ENCODE measurements at regions of chr21 and their contacts with region 1.

Region 1: GRCh38 chr21:42258153-42258884 is 39.4 kb downstream of the ABCG1 start:
- DNase-seq: peak; percentile 69 to 89 (median 76)
- ATAC-seq: peak; percentile 63 to 75 (median 64)
- H3K4me3 ChIP-seq: no peak overlapping the region
- H3K27ac ChIP-seq: no peak overlapping the region
- H3K4me1 ChIP-seq: peaks cover 2 to 67% (median 30%) of the 10 kb centered on the region in 12 donors
- H3K27me3 ChIP-seq: no peaks in the 10 kb centered on the region
- CTCF ChIP-seq: peak; percentile 69 to 88 (median 78)
- POLR2A ChIP-seq: no peak

Region 2: DNA sequence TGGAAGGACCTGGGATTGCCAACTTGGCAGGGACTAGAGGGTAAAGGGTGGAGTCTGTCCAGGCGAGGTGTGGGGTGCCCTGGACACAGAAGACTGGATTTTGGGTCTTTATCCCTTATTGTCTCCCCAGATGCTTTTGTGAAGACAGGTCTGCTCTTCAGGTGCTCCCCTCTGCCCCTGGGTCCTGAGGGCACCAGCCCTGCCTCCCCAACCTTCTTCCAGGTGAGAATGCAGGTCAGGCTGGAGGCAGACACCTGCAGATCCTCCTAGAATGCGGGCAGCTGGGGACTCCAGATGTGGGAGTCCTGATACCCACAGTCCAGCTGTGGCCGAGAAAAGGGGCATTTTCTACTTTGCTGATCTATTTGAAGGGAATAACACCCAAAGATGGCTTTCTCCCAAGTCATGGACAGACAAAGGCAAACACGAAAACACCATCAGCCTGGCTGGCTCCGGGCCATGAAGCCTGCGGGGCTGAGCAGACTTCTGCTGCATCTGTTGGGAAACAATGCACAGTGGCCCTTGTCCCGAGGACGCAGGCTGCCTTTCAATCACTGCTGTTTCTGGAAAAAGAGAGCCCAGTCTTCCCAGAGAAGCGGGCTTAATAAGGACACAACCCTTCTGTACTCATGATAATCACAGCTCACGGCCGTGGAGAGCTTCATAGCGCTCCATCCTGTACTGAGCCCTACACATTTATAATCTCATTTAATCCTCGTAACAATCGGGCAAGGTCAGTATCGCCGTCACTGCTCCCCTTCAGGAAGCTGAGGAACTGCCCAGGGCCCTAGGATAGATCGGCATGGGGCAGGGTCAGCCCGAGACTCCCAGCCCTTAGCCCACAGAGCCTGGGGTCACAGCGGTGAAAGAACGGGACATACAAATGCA is 101.4 kb before region 1 on chr21:
- intact Hi-C with region 1: loop called in 3 of 10 experiments (anchors 5 to 10 kb)
- DNase-seq: peak in 1 of 5 donors; percentile 45
- ATAC-seq: peak in 1 of 4 donors; percentile 36
- H3K4me3 ChIP-seq: no peak overlapping the region
- H3K27ac ChIP-seq: no peak overlapping the region
- H3K4me1 ChIP-seq: peaks cover 0 to 5% (median 0%) of the 10 kb centered on the region in 12 donors
- H3K27me3 ChIP-seq: peaks cover 0 to 18% (median 0%) of the 10 kb centered on the region in 9 donors
- CTCF ChIP-seq: no peak
- POLR2A ChIP-seq: no peak

Region 3: DNA sequence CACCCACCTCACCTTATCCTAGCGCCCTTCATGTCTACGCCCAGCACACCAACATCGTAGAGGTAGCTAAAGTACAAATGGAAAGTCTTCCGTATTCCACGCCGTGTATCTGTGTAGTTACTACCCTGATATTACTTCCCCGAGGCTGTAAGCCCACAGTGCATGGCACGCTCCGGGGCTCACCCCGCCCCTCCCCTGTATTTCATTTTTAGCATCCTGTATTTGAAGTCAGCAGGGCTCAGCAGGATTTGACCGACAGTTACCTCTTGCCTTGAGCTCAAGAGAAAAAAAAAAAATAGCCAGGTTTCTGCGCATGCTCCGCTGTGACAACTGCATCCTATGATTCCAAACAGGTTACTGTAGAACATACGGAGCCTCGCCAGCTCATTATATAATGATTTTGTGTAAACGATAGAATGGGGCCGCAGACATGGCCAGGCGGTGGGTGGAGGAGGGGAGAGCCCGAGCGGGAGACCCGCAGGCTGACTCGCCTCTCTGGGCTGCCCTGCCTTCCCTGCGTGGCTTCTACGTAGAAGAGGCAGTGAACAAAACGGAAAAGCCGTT is 38.1 kb before region 1 on chr21:
- intact Hi-C with region 1: loop called in 4 of 10 experiments (anchors 5 kb)
- DNase-seq: peak in 4 of 5 donors; percentile 56 to 74 (median 70)
- ATAC-seq: peak; percentile 70 to 86 (median 74)
- H3K4me3 ChIP-seq: peak overlapping the region; percentile 49 to 95 (median 78)
- H3K27ac ChIP-seq: peak overlapping the region; percentile 44 to 90 (median 83)
- H3K4me1 ChIP-seq: peaks cover 7 to 48% (median 28%) of the 10 kb centered on the region in 12 donors
- H3K27me3 ChIP-seq: no peaks in the 10 kb centered on the region
- CTCF ChIP-seq: no peak
- POLR2A ChIP-seq: no peak

Region 4: GRCh38 chr21:42239556-42240372 is 18.6 kb before region 1 on chr21:
- intact Hi-C with region 1: loop called in 1 of 10 experiments (anchors 2 kb)
- DNase-seq: peak in 1 of 5 donors; percentile 20
- ATAC-seq: no peak
- H3K4me3 ChIP-seq: no peak overlapping the region
- H3K27ac ChIP-seq: no peak overlapping the region
- H3K4me1 ChIP-seq: peaks cover 8 to 48% (median 34%) of the 10 kb centered on the region in 12 donors
- H3K27me3 ChIP-seq: no peaks in the 10 kb centered on the region
- CTCF ChIP-seq: no peak
- POLR2A ChIP-seq: no peak

Region 5: GRCh38 chr21:42299324-42300044 is 41.2 kb after region 1 on chr21:
- intact Hi-C with region 1: loop called in 1 of 10 experiments (anchors 5 kb)
- DNase-seq: peak in 4 of 5 donors; percentile 34 to 67 (median 49)
- ATAC-seq: peak in 3 of 4 donors; percentile 25 to 78 (median 41)
- H3K4me3 ChIP-seq: no peak overlapping the region
- H3K27ac ChIP-seq: peak overlapping the region in 11 of 12 donors; percentile 31 to 90 (median 62)
- H3K4me1 ChIP-seq: peaks cover 0 to 41% (median 19%) of the 10 kb centered on the region in 12 donors
- H3K27me3 ChIP-seq: no peaks in the 10 kb centered on the region
- CTCF ChIP-seq: no peak
- POLR2A ChIP-seq: no peak

Measured in heart left ventricle (tissue), 16 donors.